ENCODE measurements at regions of chr2 and their contacts with region 1.

Region 1: GRCh38 chr2:241355983-241356870 is at the start of gene FARP2:
- DNase-seq: peak; percentile 95
- H3K4me3 Mint-ChIP-seq: peak within 1 kb of the TSS; percentile 84
- H3K27ac Mint-ChIP-seq: peak within 1 kb of the TSS; percentile 83
- H3K4me1 Mint-ChIP-seq: peaks cover 22% of the 10 kb centered on the region
- H3K27me3 Mint-ChIP-seq: peaks cover 2% of the 10 kb centered on the region
- total RNA-seq, gene FARP2: 36.6 and 40.9 TPM in 2 replicates

Region 2: GRCh38 chr2:240893363-240893844 is 462.8 kb before region 1 on chr2:
- intact Hi-C with region 1: no loop called
- DNase-seq: peak; percentile 16
- H3K4me3 Mint-ChIP-seq: no peak overlapping the region
- H3K27ac Mint-ChIP-seq: peak overlapping the region; percentile 80
- H3K4me1 Mint-ChIP-seq: no peaks in the 10 kb centered on the region
- H3K27me3 Mint-ChIP-seq: no peaks in the 10 kb centered on the region

Region 3: GRCh38 chr2:241135737-241136136 is 220.5 kb before region 1 on chr2:
- intact Hi-C with region 1: no loop called
- DNase-seq: no peak
- H3K4me3 Mint-ChIP-seq: no peak overlapping the region
- H3K27ac Mint-ChIP-seq: no peak overlapping the region
- H3K4me1 Mint-ChIP-seq: peaks cover 9% of the 10 kb centered on the region
- H3K27me3 Mint-ChIP-seq: no peaks in the 10 kb centered on the region

Region 4: GRCh38 chr2:241217320-241218031 is 138.8 kb before region 1 on chr2:
- intact Hi-C with region 1: loop called (anchors 5 kb)
- DNase-seq: peak; percentile 20
- H3K4me3 Mint-ChIP-seq: peak overlapping the region; percentile 63
- H3K27ac Mint-ChIP-seq: no peak overlapping the region
- H3K4me1 Mint-ChIP-seq: peaks cover 18% of the 10 kb centered on the region
- H3K27me3 Mint-ChIP-seq: peaks cover 25% of the 10 kb centered on the region

Region 5: GRCh38 chr2:241443486-241444223 is 87.4 kb after region 1 on chr2:
- intact Hi-C with region 1: loop called (anchors 1 kb)
- DNase-seq: peak; percentile 83
- H3K4me3 Mint-ChIP-seq: peak overlapping the region; percentile 55
- H3K27ac Mint-ChIP-seq: peak overlapping the region; percentile 93
- H3K4me1 Mint-ChIP-seq: peaks cover 32% of the 10 kb centered on the region
- H3K27me3 Mint-ChIP-seq: peaks cover 30% of the 10 kb centered on the region

Region 6: GRCh38 chr2:241609859-241610793 is 253.9 kb after region 1 on chr2:
- intact Hi-C with region 1: loop called (anchors 1 kb)
- DNase-seq: peak; percentile 88
- H3K4me3 Mint-ChIP-seq: peak overlapping the region; percentile 78
- H3K27ac Mint-ChIP-seq: peak overlapping the region; percentile 83
- H3K4me1 Mint-ChIP-seq: peaks cover 18% of the 10 kb centered on the region
- H3K27me3 Mint-ChIP-seq: no peaks in the 10 kb centered on the region

Region 7: GRCh38 chr2:241702132-241703031 is 346.2 kb after region 1 on chr2:
- intact Hi-C with region 1: loop called (anchors 1 kb)
- DNase-seq: peak; percentile 82
- H3K4me3 Mint-ChIP-seq: peak overlapping the region; percentile 78
- H3K27ac Mint-ChIP-seq: peak overlapping the region; percentile 53
- H3K4me1 Mint-ChIP-seq: peaks cover 20% of the 10 kb centered on the region
- H3K27me3 Mint-ChIP-seq: no peaks in the 10 kb centered on the region

Measured in activated T-helper 1 cell treated with anti-CD3 and anti-CD28 coated beads, Interleukin-12 subunit alpha, Interleukin-12 subunit beta, Interleukin-2, Interleukin-4 antibody, amounts not matched to agents 30 ng/mL and 10 ng/mL and 1 ng/mL, durations not matched to agents 14 hours and 24 hours and 36 hours (primary cell).